Mammary epithelial cell (primary cell): ENCODE measurements at regions of chr1 and their contacts with region 1.

Region 1: GRCh38 chr1:207374887-207375286 is 53.4 kb downstream of the CD55 start:
- DNase-seq: no peak
- H3K4me3 ChIP-seq: no peak overlapping the region
- H3K27ac ChIP-seq: no peak overlapping the region
- H3K4me1 ChIP-seq: no peaks in the 10 kb centered on the region
- H3K27me3 ChIP-seq: no peaks in the 10 kb centered on the region
- CTCF ChIP-seq: no peak

Region 2: GRCh38 chr1:207344221-207344620 is 30.7 kb before region 1 on chr1:
- CTCF ChIA-PET with region 1: no interaction called
- dilution Hi-C with region 1: no loop called
- in situ Hi-C with region 1: no loop called
- intact Hi-C with region 1: loop called (anchors 5 kb)
- DNase-seq: no peak
- H3K4me3 ChIP-seq: no peak overlapping the region
- H3K27ac ChIP-seq: no peak overlapping the region
- H3K4me1 ChIP-seq: no peaks in the 10 kb centered on the region
- H3K27me3 ChIP-seq: no peaks in the 10 kb centered on the region
- CTCF ChIP-seq: no peak